Activated T-helper 1 cell treated with anti-CD3 and anti-CD28 coated beads, Interleukin-12 subunit alpha, Interleukin-12 subunit beta, Interleukin-2, Interleukin-4 antibody, amounts not matched to agents 30 ng/mL and 10 ng/mL and 1 ng/mL, durations not matched to agents 14 hours and 24 hours and 36 hours (primary cell): ENCODE measurements at regions of chr16 and their contacts with region 1.

Region 1: DNA sequence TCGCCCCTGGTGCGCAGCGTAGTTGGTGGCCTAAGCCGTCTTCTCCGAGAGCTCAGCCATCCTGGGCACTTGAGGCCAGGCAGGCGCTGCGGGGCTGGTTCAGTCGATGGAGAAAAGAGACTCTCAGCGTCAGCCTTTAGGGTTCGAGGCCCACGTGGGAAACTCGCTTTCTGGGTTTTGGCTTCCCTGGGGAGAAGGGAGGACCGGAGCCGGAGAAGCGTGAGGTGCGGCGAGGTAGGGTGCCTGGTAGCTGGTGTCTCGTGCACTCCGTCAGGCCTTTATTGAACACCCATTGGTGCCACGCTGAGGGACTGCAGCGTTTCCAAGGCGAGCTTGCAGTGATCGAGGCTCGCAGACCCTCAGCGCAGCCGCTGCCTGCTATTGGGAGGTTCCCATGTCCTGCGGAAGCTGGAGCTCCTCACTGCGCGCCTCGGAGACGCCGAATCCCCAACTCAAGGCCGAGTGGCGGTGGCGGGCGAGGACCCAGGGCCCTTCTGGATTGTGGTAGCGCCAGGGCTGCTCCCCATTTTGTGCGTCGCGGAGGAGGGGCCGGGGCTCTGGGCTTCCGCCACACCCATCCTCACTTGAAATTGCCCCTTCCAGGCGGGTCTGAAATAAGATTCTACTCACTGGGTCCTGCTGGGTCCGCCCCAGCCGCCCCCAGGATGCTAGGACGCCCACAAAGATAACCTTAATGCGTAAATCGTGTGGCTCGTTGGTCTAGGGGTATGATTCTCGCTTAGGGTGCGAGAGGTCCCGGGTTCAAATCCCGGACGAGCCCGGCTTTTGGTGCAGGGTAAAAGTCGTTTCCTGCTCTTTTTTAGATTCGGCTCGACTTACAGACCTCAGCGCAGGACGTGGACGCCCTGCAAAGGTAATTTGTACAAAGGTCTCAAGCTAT is 1.2 kb downstream of the OR1F1 start:
- DNase-seq: no peak
- H3K4me3 Mint-ChIP-seq: peak overlapping the region; percentile 73
- H3K27ac Mint-ChIP-seq: peak overlapping the region; percentile 85
- H3K4me1 Mint-ChIP-seq: peaks cover 44% of the 10 kb centered on the region
- H3K27me3 Mint-ChIP-seq: peaks cover 46% of the 10 kb centered on the region

Region 2: DNA sequence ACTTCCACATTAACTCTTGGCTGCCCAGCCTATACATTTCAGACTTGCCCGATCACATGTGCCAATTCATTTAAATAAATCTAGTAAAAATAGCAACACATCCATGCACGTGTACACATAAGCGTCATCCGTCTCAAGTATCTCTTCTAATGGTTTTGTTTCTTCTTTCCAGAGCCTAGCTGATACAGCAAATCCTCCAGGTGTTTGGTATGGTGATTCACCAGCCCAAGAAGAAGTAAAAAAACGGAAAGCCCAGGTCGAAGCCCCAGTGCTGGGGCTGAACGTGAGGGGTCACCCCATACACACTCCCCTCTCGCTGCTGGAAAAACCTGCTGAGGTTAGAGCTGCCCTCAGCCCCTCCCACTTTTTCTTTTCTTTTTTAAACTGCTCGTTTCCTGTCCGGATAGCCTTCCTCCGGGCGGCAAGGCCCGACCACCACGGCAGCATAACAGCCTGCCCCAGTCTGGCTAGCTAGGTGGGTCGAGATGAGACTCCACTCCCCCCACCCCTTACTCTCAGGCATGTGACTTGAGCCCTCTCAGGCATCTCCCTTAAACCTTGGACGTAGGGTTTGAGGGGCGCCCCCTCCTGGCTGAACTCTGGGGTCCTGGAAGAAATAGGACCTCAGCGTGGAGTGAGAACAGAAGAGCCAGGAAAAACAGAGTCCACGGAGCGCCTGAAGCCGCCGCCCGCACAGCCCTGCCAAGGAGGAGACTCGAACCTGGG is 15.1 kb before region 1 on chr16:
- intact Hi-C with region 1: loop called (anchors 1 kb)
- DNase-seq: no peak
- H3K4me3 Mint-ChIP-seq: peak overlapping the region; percentile 72
- H3K27ac Mint-ChIP-seq: peak overlapping the region; percentile 48
- H3K4me1 Mint-ChIP-seq: peaks cover 29% of the 10 kb centered on the region
- H3K27me3 Mint-ChIP-seq: peaks cover 68% of the 10 kb centered on the region

Region 3: GRCh38 chr16:3212006-3212405 is 22.8 kb after region 1 on chr16:
- intact Hi-C with region 1: no loop called
- DNase-seq: no peak
- H3K4me3 Mint-ChIP-seq: no peak overlapping the region
- H3K27ac Mint-ChIP-seq: no peak overlapping the region
- H3K4me1 Mint-ChIP-seq: peaks cover 30% of the 10 kb centered on the region
- H3K27me3 Mint-ChIP-seq: no peaks in the 10 kb centered on the region

Region 4: GRCh38 chr16:3223913-3224515 is 34.8 kb after region 1 on chr16:
- intact Hi-C with region 1: loop called (anchors 5 kb)
- DNase-seq: no peak
- H3K4me3 Mint-ChIP-seq: no peak overlapping the region
- H3K27ac Mint-ChIP-seq: no peak overlapping the region
- H3K4me1 Mint-ChIP-seq: no peaks in the 10 kb centered on the region
- H3K27me3 Mint-ChIP-seq: no peaks in the 10 kb centered on the region

Region 5: DNA sequence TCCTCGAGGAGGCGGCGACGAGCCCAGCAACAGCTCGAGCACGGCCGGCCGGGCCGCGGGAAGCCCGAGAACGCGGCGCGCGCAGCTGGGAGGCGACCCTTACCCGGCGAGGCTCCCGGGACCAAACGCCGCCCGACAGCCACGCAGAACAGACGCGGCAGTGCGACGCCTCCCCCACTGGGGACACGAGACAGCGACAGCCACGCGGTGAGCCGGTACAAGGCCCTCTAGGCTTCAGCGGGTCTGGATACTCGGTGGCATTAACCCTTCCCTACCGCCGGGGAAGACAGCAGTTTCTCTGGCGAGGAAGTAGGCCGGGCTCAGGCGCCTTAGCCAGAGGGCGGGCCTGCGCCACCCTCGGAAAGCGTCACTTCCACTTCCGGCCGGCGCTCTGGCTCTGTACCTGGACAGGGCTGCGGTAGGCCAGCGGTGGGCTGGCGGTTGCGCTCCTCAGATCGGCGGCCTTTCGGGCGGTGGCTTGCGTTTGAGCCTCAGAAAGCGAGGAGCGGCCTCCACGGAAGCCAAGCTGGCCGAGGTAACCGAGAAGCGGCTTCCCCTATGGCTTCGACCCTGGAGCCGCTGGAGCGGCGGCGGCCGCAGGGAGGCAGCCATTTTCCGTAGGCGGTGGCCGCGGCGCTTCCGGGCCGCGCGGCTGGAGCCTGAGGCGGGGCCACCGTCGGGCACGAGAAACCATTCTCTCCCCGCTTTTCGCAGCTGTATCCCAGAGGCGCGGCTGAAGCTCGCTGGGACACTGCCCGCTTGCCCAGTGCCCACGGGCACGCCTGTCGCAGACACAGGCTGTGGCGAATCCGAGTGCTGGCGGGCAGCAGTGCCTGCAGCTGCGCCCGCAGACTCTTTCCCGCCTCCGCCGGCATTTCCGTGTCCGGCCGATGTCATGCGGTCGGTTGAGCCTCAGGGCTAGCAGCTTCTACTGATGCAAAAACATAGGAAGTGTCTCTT is 116.2 kb after region 1 on chr16 and contains the starts of genes TIGD7 and ZNF75A:
- intact Hi-C with region 1: loop called (anchors 2 kb)
- DNase-seq: peak; percentile 79
- H3K4me3 Mint-ChIP-seq: peak within 1 kb of the TSS; percentile 75
- H3K27ac Mint-ChIP-seq: peak within 1 kb of the TSS; percentile 70
- H3K4me1 Mint-ChIP-seq: peaks cover 8% of the 10 kb centered on the region
- H3K27me3 Mint-ChIP-seq: no peaks in the 10 kb centered on the region
- total RNA-seq, gene TIGD7: 2.0 and 3.1 TPM in 2 replicates
- total RNA-seq, gene ZNF75A: 26.5 and 27.6 TPM in 2 replicates

Region 6: GRCh38 chr16:3490911-3491629 is 301.9 kb after region 1 on chr16:
- intact Hi-C with region 1: no loop called
- DNase-seq: no peak
- H3K4me3 Mint-ChIP-seq: no peak overlapping the region
- H3K27ac Mint-ChIP-seq: no peak overlapping the region
- H3K4me1 Mint-ChIP-seq: no peaks in the 10 kb centered on the region
- H3K27me3 Mint-ChIP-seq: no peaks in the 10 kb centered on the region